CD14-positive monocyte (primary cell): ENCODE measurements at regions of chr19 and their contacts with region 1.

Region 1: GRCh38 chr19:53103198-53103944 is at the start of gene ZNF160:
- DNase-seq: peak; percentile 92 to 97 (median 92)
- H3K4me3 ChIP-seq: peak within 1 kb of the TSS; percentile 57 to 95 (median 93)
- H3K4me3 Mint-ChIP-seq: peak within 1 kb of the TSS; percentile 90 to 92
- H3K27ac ChIP-seq: peak within 1 kb of the TSS; percentile 89 to 93
- H3K27ac Mint-ChIP-seq: peak within 1 kb of the TSS; percentile 86 to 96 (median 93)
- H3K4me1 ChIP-seq: peaks cover 19 to 24% of the 10 kb centered on the region in 2 donors
- H3K4me1 Mint-ChIP-seq: peaks cover 17% of the 10 kb centered on the region
- H3K27me3 ChIP-seq: no peaks in the 10 kb centered on the region
- H3K27me3 Mint-ChIP-seq: peaks cover 2 to 9% (median 4%) of the 10 kb centered on the region in 3 donors
- CTCF ChIP-seq: no peak
- polyA plus RNA-seq, gene ZNF160: 6.4 to 24.5 (median 7.7) TPM

Region 2: GRCh38 chr19:53019684-53020083 is 83.7 kb before region 1 on chr19:
- intact Hi-C with region 1: no loop called
- DNase-seq: no peak
- H3K4me3 ChIP-seq: no peak overlapping the region
- H3K4me3 Mint-ChIP-seq: no peak overlapping the region
- H3K27ac ChIP-seq: no peak overlapping the region
- H3K27ac Mint-ChIP-seq: no peak overlapping the region
- H3K4me1 ChIP-seq: no peaks in the 10 kb centered on the region
- H3K4me1 Mint-ChIP-seq: no peaks in the 10 kb centered on the region
- H3K27me3 ChIP-seq: no peaks in the 10 kb centered on the region
- H3K27me3 Mint-ChIP-seq: peaks cover 0 to 2% (median 0%) of the 10 kb centered on the region in 3 donors
- CTCF ChIP-seq: peak; percentile 8

Region 3: GRCh38 chr19:53132141-53132991 is 29.0 kb after region 1 on chr19 and contains the start of gene ZNF415:
- intact Hi-C with region 1: loop called (anchors 1 to 2 kb)
- DNase-seq: peak; percentile 3 to 26 (median 20)
- H3K4me3 ChIP-seq: peak within 1 kb of the TSS; percentile 32 to 69 (median 33)
- H3K4me3 Mint-ChIP-seq: peak within 1 kb of the TSS; percentile 74 to 92
- H3K27ac ChIP-seq: no peak within 1 kb of the TSS
- H3K27ac Mint-ChIP-seq: no peak within 1 kb of the TSS
- H3K4me1 ChIP-seq: peaks cover 11 to 12% of the 10 kb centered on the region in 2 donors
- H3K4me1 Mint-ChIP-seq: peaks cover 18% of the 10 kb centered on the region
- H3K27me3 ChIP-seq: peaks cover 0 to 21% of the 10 kb centered on the region in 2 donors
- H3K27me3 Mint-ChIP-seq: peaks cover 17 to 31% (median 27%) of the 10 kb centered on the region in 3 donors
- CTCF ChIP-seq: no peak
- polyA plus RNA-seq, gene ZNF415: 0.11 to 0.17 TPM in 2 of 3 donors, not detected in the other

Region 4: DNA sequence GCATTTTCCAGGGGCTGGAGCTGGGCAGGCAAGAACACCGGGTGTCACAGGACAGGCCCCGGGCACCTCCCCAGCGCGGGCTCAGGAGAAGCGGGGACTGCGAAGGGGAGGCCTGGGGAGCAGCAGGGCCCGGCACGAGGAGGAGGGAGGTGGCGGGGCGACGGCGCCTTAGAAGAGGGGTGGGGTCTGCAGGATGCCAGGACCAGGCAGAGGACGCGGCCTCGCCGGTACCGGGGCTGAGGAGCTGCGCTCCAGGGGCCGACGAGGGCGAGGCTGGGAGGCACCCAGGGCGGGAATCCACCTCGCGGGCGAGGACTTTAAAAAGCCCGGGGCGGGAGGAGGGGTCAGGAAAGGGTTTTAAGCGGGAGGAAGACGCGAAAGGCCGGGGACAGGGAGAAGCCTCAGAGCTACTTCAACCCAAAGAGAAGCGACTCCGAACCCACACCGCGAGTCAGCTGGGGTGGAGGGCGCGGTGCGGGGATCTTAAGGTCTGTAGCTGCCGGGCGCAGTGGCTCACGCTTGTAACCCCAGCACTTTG is 54.8 kb after region 1 on chr19:
- intact Hi-C with region 1: loop called (anchors 5 kb)
- DNase-seq: peak; percentile 0 to 11 (median 5)
- H3K4me3 ChIP-seq: peak overlapping the region; percentile 61 to 82 (median 68)
- H3K4me3 Mint-ChIP-seq: peak overlapping the region; percentile 89 to 91
- H3K27ac ChIP-seq: peak overlapping the region in 1 of 2 donors; percentile 36
- H3K27ac Mint-ChIP-seq: peak overlapping the region; percentile 6 to 85 (median 57)
- H3K4me1 ChIP-seq: peaks cover 14 to 22% of the 10 kb centered on the region in 2 donors
- H3K4me1 Mint-ChIP-seq: peaks cover 20% of the 10 kb centered on the region
- H3K27me3 ChIP-seq: no peaks in the 10 kb centered on the region
- H3K27me3 Mint-ChIP-seq: peaks cover 4 to 6% (median 5%) of the 10 kb centered on the region in 3 donors
- CTCF ChIP-seq: no peak